ENCODE measurements at regions of chr2 and their contacts with region 1.

Region 1: GRCh38 chr2:98412751-98413458 is 31.8 kb upstream of the INPP4A start:
- DNase-seq: peak; percentile 70
- ATAC-seq: peak; percentile 90
- H3K4me3 Mint-ChIP-seq: no peak overlapping the region
- H3K27ac Mint-ChIP-seq: no peak overlapping the region
- H3K4me1 Mint-ChIP-seq: peaks cover 20% of the 10 kb centered on the region
- H3K27me3 Mint-ChIP-seq: peaks cover 10% of the 10 kb centered on the region

Region 2: GRCh38 chr2:98390571-98391465 is 22.1 kb before region 1 on chr2:
- CTCF ChIA-PET with region 1: no interaction called
- DNase-seq: no peak
- ATAC-seq: no peak
- H3K4me3 Mint-ChIP-seq: no peak overlapping the region
- H3K27ac Mint-ChIP-seq: no peak overlapping the region
- H3K4me1 Mint-ChIP-seq: no peaks in the 10 kb centered on the region
- H3K27me3 Mint-ChIP-seq: peaks cover 21% of the 10 kb centered on the region

Region 3: GRCh38 chr2:98444436-98445176 is 31.7 kb after region 1 on chr2 and contains the start of gene INPP4A:
- CTCF ChIA-PET with region 1: interaction called, 11 read pairs
- DNase-seq: peak; percentile 82
- ATAC-seq: peak; percentile 71
- H3K4me3 Mint-ChIP-seq: peak within 1 kb of the TSS; percentile 88
- H3K27ac Mint-ChIP-seq: peak within 1 kb of the TSS; percentile 90
- H3K4me1 Mint-ChIP-seq: peaks cover 40% of the 10 kb centered on the region
- H3K27me3 Mint-ChIP-seq: no peaks in the 10 kb centered on the region
- total RNA-seq, gene INPP4A: 144 to 229 TPM

Region 4: DNA sequence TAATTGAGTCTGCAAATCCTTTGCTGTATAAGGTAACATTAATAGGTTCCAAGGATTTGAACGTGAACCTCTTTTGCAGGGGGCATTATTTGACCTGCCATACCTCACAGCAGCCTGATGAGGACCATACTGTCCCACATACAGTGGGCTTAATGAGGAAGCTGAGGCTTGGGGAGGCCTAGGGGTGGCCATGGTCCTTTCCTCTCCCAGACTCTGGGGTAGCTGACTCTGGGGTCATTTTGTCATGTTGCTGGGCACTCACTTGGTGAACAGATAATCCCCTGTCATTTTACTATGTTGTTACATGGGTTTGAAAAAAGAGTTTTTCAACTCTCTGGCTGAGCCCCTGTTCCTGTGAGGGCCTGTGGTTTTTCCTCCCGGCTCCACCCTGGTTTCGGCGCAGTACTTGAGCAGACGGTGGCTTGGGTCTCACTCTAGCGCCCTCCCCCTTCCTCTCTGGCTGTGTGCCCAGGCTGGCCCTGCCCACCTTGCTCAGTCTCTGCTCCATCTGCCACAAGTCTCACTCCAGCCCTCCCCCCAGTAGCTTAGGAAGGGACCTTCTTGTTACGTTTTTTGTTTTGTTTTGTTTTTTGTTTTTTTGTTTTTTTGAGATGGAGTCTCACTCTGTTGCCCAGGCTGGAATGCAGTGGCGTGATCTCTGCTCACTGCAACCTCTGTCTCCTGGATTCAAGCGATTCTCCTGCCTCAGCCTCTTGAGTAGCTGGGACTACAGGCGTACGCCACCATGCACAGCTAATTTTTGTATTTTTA is 52.7 kb after region 1 on chr2:
- CTCF ChIA-PET with region 1: interaction called, 11 read pairs
- DNase-seq: peak; percentile 86
- ATAC-seq: peak; percentile 26
- H3K4me3 Mint-ChIP-seq: peak overlapping the region; percentile 61
- H3K27ac Mint-ChIP-seq: peak overlapping the region; percentile 93
- H3K4me1 Mint-ChIP-seq: peaks cover 93% of the 10 kb centered on the region
- H3K27me3 Mint-ChIP-seq: no peaks in the 10 kb centered on the region

Region 5: DNA sequence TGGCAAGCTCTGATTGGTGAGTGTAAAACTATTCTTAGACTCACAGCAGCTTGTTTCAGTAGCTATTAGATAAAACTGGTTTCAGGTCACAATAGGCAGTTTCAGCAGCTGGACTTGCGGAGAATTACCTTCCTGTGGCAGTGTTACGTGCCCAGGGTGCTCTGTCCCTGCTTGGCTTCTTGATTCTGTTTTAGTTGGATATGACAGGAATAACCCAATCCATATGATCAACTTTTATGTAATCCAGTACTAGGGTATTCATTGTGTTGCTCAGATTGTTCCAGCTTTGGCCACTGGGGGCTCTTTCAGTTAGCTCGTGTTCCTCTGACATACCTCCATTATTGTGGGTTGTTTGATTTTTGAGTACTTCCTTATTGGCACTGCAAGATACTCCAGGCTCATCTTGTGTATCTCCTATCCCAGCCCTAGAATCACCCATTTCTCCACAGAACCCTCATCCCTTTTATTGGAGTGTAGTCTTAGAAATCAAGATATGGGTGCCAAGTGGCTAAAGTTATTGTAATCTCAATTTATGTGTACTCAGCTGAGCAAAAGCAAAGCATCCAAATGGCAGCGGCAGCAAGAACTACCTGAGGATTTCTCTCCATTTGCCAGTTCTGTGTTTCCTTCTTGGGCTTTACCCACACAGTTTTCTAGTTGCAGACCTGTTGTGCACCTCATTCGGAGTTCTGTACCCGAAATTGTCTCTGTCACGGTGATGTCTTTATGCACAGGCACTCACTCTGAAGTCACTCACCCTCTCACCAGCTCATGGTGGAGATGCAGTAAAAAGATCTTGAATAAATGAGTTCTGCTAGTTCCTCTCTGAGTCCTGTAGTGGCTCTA is 75.1 kb after region 1 on chr2:
- CTCF ChIA-PET with region 1: interaction called, 13 read pairs
- DNase-seq: peak; percentile 59
- ATAC-seq: peak; percentile 40
- H3K4me3 Mint-ChIP-seq: no peak overlapping the region
- H3K27ac Mint-ChIP-seq: peak overlapping the region; percentile 0
- H3K4me1 Mint-ChIP-seq: peaks cover 79% of the 10 kb centered on the region
- H3K27me3 Mint-ChIP-seq: no peaks in the 10 kb centered on the region

Region 6: DNA sequence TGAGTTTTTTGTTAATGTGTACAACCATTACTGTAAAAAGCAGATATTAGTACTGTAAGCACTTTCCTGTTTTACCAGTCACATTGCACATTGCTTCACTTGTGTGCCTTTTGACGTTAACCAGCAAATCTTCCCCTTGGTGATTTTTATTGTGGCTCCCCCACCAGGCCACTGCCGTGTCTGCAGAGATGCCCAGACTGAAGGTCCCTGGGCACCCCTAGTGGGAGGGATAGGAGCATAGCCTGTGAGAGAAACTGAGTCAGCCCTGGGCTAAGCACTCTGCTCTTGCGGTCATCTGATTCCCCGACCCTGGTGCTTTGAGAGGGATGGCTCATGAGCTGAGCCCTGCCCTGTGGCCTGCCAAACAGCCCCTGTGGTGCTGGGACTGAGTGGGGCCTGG is 105.2 kb after region 1 on chr2:
- CTCF ChIA-PET with region 1: interaction called, 24 read pairs
- DNase-seq: peak; percentile 64
- ATAC-seq: peak; percentile 73
- H3K4me3 Mint-ChIP-seq: no peak overlapping the region
- H3K27ac Mint-ChIP-seq: no peak overlapping the region
- H3K4me1 Mint-ChIP-seq: peaks cover 52% of the 10 kb centered on the region
- H3K27me3 Mint-ChIP-seq: no peaks in the 10 kb centered on the region

Region 7: GRCh38 chr2:98601532-98602132 is 188.7 kb after region 1 on chr2:
- CTCF ChIA-PET with region 1: interaction called, 12 read pairs
- DNase-seq: no peak
- ATAC-seq: peak; percentile 88
- H3K4me3 Mint-ChIP-seq: no peak overlapping the region
- H3K27ac Mint-ChIP-seq: no peak overlapping the region
- H3K4me1 Mint-ChIP-seq: peaks cover 37% of the 10 kb centered on the region
- H3K27me3 Mint-ChIP-seq: no peaks in the 10 kb centered on the region

Region 8: GRCh38 chr2:98761267-98761781 is 348.4 kb after region 1 on chr2:
- CTCF ChIA-PET with region 1: no interaction called
- DNase-seq: peak; percentile 73
- ATAC-seq: peak; percentile 42
- H3K4me3 Mint-ChIP-seq: peak overlapping the region; percentile 40
- H3K27ac Mint-ChIP-seq: peak overlapping the region; percentile 63
- H3K4me1 Mint-ChIP-seq: peaks cover 73% of the 10 kb centered on the region
- H3K27me3 Mint-ChIP-seq: no peaks in the 10 kb centered on the region

Measured in activated CD8-positive, alpha-beta memory T cell treated with anti-CD3 and anti-CD28 coated beads, Interleukin-2, amount 10 ng/mL, durations not matched to agents 7 days and 5 days (primary cell).